Sigmoid colon (tissue), 7 donors: ENCODE measurements at regions of chr1 and their contacts with region 1.

Region 1: DNA sequence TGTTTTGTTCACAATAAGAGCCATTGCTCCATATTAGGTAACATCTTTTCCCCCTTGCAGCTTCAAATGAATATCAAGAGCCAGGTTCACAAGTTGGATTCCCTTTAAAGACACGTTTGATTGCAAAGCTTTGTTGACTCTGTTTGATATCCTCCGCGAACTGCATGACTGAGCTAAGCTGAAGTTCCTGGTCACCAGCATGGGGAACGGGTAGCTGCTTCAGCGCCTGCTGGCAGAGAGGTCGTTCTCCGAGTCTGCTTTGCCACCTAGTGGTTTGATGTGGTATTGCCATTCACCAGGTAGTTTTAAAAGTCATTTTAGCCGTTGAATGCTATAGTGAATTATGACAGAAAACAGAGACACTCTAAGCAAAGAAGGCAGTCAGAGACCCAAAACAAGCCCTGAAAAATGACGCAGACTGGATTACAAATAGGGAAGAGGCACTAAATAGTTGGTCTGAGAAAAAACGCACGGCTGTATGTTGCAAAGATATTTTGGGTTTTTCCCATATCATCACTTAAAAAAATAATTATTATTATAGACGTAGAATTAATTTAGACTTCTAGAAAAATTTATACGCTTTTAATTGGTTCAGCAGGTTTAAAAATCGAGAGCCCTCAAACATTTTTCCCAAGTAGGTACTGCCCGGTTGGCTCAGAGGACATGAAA is 193.5 kb upstream of the FMN2 start:
- DNase-seq: peak; percentile 91
- H3K4me3 ChIP-seq: peak overlapping the region in 3 of 4 donors; percentile 8 to 30 (median 26)
- H3K27ac ChIP-seq: peak overlapping the region in 3 of 4 donors; percentile 25 to 53 (median 35)
- H3K4me1 ChIP-seq: peaks cover 0 to 27% (median 19%) of the 10 kb centered on the region in 4 donors
- H3K27me3 ChIP-seq: no peaks in the 10 kb centered on the region
- CTCF ChIP-seq: peak; percentile 82 to 98 (median 95)
- EP300 ChIP-seq: no peak
- POLR2A ChIP-seq: no peak

Region 2: GRCh38 chr1:239308701-239309333 is 589.4 kb before region 1 on chr1:
- intact Hi-C with region 1: loop called (anchors 10 kb)
- DNase-seq: no peak
- H3K4me3 ChIP-seq: no peak overlapping the region
- H3K27ac ChIP-seq: no peak overlapping the region
- H3K4me1 ChIP-seq: no peaks in the 10 kb centered on the region
- H3K27me3 ChIP-seq: no peaks in the 10 kb centered on the region
- CTCF ChIP-seq: peak in 1 of 4 experiments; percentile 34
- EP300 ChIP-seq: no peak
- POLR2A ChIP-seq: no peak

Region 3: DNA sequence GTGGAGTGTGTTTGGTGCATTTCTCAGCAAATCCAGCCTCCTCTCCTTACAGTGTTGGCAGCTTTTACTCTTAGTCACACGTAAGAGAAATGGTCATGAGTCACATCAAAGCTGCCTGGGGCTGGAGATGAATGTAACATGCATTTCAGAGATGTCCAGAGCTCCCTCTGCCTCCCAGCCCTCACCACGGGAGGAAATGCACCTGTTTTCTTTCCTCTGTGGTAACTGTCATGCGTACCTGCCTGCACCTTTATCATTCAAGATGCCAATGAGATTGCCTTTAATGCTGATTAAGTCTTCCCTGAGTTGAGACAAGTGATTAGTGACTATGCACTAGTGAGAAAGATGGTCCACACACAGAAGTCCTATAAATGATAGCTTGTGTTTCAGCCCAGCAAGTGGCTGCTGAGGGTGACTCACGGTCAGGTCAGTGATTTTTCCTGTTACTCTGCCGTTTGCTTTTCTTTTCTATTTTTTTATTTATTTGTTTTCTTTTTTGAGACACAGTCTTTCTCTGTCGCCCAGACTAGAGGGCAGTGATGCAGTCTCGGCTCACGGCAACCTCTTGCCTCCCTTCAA is 83.8 kb before region 1 on chr1:
- intact Hi-C with region 1: loop called (anchors 10 kb)
- DNase-seq: peak; percentile 74
- H3K4me3 ChIP-seq: no peak overlapping the region
- H3K27ac ChIP-seq: peak overlapping the region; percentile 66 to 91 (median 83)
- H3K4me1 ChIP-seq: peaks cover 0 to 55% (median 45%) of the 10 kb centered on the region in 4 donors
- H3K27me3 ChIP-seq: no peaks in the 10 kb centered on the region
- CTCF ChIP-seq: no peak
- EP300 ChIP-seq: peak in 1 of 4 donors; percentile 2
- POLR2A ChIP-seq: no peak

Region 4: DNA sequence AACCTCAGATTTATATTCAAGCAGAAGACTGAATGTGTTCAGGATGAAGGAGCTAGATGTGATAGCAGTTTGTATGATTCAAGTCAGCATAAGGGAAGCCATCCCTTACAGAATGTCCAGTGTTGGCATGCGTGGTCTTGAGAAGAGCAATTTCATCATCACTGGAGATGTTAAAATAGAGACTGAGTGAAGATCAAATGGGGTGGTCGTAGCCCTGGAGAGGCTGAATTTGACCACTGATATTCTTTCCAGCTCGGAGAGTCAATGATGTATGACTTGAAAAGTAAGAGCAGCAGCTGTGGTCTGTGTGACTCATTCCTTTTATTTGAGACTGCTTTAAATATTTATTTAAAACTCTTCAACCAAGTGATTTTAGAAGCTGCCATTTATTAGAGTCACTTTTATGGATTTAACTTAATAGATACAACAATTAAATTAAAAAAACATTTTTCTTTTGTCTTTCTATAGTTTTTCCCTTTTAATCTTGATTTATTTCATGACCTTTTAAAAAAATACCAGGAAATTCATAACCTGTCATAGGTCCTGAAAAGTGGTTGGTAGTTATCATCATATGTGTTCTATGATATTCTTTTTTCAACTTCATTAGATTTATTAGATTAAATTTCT is 209.0 kb after region 1 on chr1:
- intact Hi-C with region 1: no loop called
- DNase-seq: no peak
- H3K4me3 ChIP-seq: no peak overlapping the region
- H3K27ac ChIP-seq: peak overlapping the region in 3 of 4 donors; percentile 17 to 41 (median 27)
- H3K4me1 ChIP-seq: peaks cover 0 to 64% (median 16%) of the 10 kb centered on the region in 4 donors
- H3K27me3 ChIP-seq: no peaks in the 10 kb centered on the region
- CTCF ChIP-seq: no peak
- EP300 ChIP-seq: no peak
- POLR2A ChIP-seq: no peak

Region 5: DNA sequence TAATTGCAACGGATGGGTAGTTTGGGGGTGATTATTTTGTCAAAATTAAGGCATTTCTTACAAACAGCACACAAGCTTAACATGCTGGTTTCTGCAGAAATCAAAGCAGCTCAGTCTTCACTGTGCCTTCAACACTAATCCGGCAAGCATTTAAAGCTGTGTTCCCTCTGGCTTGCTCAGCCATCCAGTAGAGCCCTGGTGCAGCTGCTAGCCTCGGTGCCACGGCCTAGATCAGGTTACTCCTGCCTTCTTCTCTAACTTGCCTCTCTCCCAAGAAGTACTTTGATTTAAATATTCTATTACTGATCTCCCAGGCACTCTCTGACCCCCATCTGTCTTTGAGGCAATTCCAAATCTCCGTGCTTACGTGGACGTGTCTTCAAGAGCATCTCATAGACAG is 628.1 kb after region 1 on chr1:
- intact Hi-C with region 1: no loop called
- DNase-seq: no peak
- H3K4me3 ChIP-seq: no peak overlapping the region
- H3K27ac ChIP-seq: no peak overlapping the region
- H3K4me1 ChIP-seq: peaks cover 0 to 36% (median 8%) of the 10 kb centered on the region in 4 donors
- H3K27me3 ChIP-seq: no peaks in the 10 kb centered on the region
- CTCF ChIP-seq: no peak
- EP300 ChIP-seq: no peak
- POLR2A ChIP-seq: no peak